A673 (cell line): ENCODE measurements at regions of chr3 and their contacts with region 1.

Region 1: DNA sequence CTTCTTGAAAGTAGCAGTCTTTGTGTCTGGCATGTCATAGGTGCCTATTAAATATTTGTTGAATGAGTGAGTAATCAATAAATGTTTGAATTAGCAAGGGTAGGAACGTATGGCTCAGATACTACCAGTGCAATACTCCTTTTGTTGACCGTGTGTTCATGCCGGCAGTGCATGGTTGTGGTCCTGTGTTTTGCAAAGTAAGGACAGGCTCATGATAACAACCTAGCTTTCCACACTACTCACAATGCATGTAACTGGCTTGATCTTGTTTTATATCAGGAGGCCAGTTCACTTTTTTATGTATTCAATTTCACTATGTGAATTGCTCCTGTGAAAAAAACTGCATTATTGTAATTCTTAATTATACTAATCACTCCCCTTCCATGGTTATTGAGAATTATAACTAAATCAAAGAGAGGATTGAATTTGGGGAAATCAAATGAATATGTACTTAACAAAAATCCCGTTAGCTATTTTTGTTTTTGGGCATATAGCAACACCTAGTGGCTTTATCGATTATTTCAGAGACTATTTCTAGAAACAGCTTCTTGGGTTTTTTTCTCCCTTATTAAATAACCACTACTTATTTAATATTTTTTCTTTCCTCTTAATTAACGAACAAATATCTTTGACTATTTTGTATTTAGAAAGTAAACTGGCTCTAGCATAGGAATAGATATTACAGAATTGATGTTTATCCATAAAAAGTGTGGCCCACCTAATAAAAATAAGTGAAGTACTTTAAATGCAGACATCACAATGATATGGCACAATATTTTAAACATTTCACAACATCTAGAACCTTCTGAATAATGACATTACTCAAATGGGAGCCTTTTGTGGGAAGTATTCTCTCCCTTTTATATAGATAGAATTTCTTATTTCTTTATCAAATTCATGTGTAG is 218.5 kb downstream of the BBX start:
- DNase-seq: peak; percentile 45
- H3K4me3 ChIP-seq: no peak overlapping the region
- H3K27ac ChIP-seq: no peak overlapping the region
- H3K4me1 ChIP-seq: no peaks in the 10 kb centered on the region
- H3K27me3 ChIP-seq: no peaks in the 10 kb centered on the region
- CTCF ChIP-seq: peak; percentile 62

Region 2: DNA sequence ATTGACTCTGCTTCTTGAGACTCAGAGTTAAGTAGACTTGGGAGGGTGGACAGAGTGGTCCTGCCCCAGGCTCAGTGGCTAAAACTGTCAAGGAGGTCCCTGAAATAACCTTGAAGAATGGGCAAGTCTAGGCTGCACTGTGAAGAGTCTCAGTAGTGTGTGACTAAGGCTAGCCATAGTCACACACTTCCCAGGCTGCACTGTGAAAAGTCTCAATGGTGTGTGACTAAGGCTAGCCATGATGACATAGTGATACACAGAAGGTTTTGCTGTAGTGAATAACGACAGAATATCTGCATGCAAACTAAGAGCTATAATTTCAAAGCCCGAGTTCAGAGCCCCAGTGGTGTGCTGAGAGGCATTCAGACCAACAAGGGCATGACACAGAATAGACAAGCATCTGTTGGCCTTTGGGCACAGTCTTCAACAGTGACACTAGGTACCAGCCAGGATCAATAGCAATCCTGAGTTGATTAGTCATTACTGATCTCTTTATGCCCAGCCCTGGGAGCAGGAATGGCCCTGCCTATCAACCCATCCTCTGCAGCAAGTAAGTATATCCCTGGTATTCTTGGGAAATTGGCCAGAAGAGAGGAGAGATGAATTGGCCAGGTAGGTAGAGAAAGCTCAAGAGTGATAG is 290.9 kb before region 1 on chr3:
- CTCF ChIA-PET with region 1: no interaction called
- POLR2A ChIA-PET with region 1: no interaction called
- intact Hi-C with region 1: no loop called
- DNase-seq: no peak
- H3K4me3 ChIP-seq: no peak overlapping the region
- H3K27ac ChIP-seq: no peak overlapping the region
- H3K4me1 ChIP-seq: no peaks in the 10 kb centered on the region
- H3K27me3 ChIP-seq: no peaks in the 10 kb centered on the region
- CTCF ChIP-seq: no peak

Region 3: GRCh38 chr3:107676469-107677309 is 64.6 kb before region 1 on chr3:
- CTCF ChIA-PET with region 1: interaction called, 8 read pairs
- POLR2A ChIA-PET with region 1: no interaction called
- intact Hi-C with region 1: loop called (anchors 5 kb)
- DNase-seq: peak; percentile 61
- H3K4me3 ChIP-seq: no peak overlapping the region
- H3K27ac ChIP-seq: no peak overlapping the region
- H3K4me1 ChIP-seq: no peaks in the 10 kb centered on the region
- H3K27me3 ChIP-seq: no peaks in the 10 kb centered on the region
- CTCF ChIP-seq: peak; percentile 69

Region 4: DNA sequence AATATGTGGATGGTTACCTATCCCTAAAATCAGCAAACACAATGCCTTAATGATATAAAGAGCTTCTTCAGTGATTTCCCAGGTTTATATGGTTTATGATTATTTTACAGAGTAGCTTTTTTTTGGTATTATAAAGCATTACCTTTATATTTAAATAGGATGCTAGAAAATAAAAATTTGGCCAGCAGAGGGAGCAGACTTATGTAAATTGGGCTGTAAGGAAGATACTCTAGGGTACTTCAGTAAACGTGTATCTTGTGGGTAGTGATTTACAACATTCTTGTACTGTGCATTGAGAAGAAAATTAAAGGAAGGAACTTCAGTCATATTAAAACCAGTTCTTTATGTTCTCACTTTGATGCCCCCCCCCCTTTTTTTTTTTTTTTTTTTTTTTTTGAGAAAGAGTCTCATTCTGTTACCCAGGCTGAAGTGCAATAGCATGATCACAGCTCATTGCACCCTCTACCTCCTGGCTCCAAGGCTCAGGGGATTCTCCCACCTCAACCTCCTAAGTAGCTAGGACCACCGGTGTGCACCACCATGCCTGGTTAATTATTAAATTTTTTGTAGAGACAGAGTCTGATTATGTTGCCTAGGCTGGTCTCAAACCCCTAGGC is 50.6 kb before region 1 on chr3:
- CTCF ChIA-PET with region 1: interaction called, 4 read pairs
- POLR2A ChIA-PET with region 1: no interaction called
- intact Hi-C with region 1: loop called (anchors 2 kb)
- DNase-seq: peak; percentile 72
- H3K4me3 ChIP-seq: no peak overlapping the region
- H3K27ac ChIP-seq: no peak overlapping the region
- H3K4me1 ChIP-seq: no peaks in the 10 kb centered on the region
- H3K27me3 ChIP-seq: no peaks in the 10 kb centered on the region
- CTCF ChIP-seq: peak; percentile 67

Region 5: DNA sequence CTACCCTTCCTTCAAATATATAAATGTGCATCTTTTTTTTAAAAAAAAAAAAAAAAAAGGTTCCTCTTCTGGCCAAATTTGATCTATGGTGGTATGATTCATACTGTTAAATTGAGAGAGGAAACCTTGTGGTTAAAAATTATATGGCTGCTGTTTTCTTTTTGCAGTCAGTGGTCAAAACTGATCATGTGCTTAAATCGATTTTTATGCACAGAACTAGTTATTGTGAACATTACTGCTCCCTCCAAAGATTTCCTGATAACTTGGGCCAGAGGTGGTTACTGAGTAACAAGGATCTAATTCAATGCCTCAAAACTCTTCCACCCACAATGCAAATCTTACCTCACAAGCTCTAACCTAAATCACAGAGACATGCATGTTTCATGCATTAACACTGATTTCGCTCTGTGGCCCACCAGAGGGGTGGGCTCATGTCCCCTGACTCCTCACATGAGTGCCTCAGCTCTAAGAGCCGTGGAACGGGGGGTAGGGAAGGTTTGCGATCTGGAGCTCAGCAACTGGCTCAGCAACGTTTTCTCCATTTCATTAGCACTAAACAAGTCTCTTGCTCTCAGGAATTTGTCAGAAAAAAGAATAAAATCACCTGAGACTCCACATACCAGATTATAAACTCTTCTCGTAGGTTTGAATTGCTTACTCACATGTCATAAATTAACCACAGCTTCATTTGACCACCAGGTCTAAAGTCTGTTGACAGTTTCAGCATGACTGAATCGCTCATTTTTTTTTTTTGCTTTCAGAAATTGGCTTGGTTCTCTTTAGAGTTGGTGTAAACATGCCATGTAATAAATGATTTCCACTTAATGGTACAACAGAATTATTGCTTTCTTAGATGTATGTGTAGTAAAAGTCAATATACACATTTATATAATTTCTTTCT is 69.2 kb after region 1 on chr3:
- CTCF ChIA-PET with region 1: no interaction called
- POLR2A ChIA-PET with region 1: no interaction called
- intact Hi-C with region 1: no loop called
- DNase-seq: no peak
- H3K4me3 ChIP-seq: no peak overlapping the region
- H3K27ac ChIP-seq: no peak overlapping the region
- H3K4me1 ChIP-seq: no peaks in the 10 kb centered on the region
- H3K27me3 ChIP-seq: no peaks in the 10 kb centered on the region
- CTCF ChIP-seq: no peak